ENCODE measurements at regions of chr7 and their contacts with region 1.

Region 1: GRCh38 chr7:6130007-6130587 is 98.9 kb downstream of the ANKRD61 start:
- DNase-seq: no peak
- H3K4me3 ChIP-seq: no peak overlapping the region
- H3K27ac ChIP-seq: no peak overlapping the region
- H3K4me1 ChIP-seq: no peaks in the 10 kb centered on the region
- H3K27me3 ChIP-seq: no peaks in the 10 kb centered on the region
- CTCF ChIP-seq: no peak

Region 2: DNA sequence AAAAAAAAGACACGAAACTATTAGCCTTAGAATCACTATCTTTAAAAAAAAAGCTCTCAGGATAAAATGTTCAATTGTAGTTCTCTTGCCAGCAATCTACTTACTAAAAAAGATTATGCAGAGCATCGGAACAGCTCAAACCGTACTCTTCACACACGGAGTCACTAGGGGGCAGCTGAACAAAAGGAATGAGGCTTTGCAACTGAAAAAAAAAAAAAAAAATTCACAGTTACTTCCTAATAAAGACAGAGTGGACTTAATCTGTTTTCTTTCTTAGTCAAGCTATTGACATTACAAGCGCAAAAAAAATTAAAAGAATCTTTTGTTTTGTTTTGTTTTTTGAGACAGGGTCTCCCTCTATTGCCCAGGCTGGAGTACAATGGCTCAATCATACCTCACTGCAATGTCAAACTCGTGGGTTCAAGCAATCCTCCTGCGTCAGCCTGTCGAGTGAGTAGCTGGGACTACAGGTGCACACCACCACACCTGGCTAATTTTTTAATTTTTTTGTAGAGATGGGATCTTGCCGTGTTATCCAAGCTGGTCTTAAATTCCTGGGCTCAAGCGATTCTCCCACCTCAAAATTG is 132.8 kb before region 1 on chr7:
- CTCF ChIA-PET with region 1: no interaction called
- POLR2A ChIA-PET with region 1: interaction called, 11 read pairs
- intact Hi-C with region 1: no loop called
- DNase-seq: peak; percentile 82
- H3K4me3 ChIP-seq: no peak overlapping the region
- H3K27ac ChIP-seq: no peak overlapping the region
- H3K4me1 ChIP-seq: peaks cover 18% of the 10 kb centered on the region
- H3K27me3 ChIP-seq: no peaks in the 10 kb centered on the region
- CTCF ChIP-seq: peak; percentile 80

Region 3: DNA sequence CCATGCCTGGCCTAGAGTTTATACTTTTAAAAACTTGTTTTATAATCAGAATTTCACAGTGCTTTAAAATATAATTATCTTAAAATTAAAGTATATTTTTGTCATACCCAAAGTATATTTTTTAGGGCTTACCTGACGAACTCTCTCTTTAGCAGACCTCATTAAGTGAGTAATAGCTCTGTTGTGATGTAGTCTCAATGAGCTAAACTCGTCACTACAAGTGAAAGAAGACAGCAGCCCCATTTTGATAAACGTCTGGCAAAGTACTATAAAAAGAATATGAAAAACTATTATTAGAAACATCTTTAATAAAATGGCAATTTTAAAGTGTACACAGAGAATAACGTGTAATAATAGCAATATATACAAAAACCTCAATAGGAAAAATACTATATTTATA is 80.3 kb before region 1 on chr7:
- CTCF ChIA-PET with region 1: no interaction called
- POLR2A ChIA-PET with region 1: no interaction called
- intact Hi-C with region 1: no loop called
- DNase-seq: no peak
- H3K4me3 ChIP-seq: no peak overlapping the region
- H3K27ac ChIP-seq: no peak overlapping the region
- H3K4me1 ChIP-seq: no peaks in the 10 kb centered on the region
- H3K27me3 ChIP-seq: no peaks in the 10 kb centered on the region
- CTCF ChIP-seq: no peak